Sciatic nerve (tissue), 2 donors: ENCODE measurements at regions of chr22 and their contacts with region 1.

Region 1: DNA sequence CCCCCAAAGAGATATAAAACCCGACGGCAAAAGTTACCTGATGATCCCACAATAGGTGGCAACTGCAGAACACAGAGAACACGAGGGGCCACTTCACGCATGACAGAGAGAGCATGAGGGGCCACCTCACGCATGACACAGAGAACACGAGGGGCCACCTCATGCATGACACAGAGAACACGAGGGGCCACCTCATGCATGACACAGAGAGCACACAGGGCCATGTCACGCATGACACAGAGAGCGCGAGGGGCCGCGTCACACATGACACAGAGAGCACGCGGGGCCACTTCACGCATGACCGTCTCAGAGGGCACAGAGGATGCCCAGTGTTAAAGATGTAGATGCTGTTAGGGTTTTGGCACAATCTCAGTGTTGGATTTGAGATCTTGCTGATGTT is 1359.5 kb downstream of the TBC1D22A start:
- DNase-seq: no peak
- ATAC-seq: no peak

Region 2: DNA sequence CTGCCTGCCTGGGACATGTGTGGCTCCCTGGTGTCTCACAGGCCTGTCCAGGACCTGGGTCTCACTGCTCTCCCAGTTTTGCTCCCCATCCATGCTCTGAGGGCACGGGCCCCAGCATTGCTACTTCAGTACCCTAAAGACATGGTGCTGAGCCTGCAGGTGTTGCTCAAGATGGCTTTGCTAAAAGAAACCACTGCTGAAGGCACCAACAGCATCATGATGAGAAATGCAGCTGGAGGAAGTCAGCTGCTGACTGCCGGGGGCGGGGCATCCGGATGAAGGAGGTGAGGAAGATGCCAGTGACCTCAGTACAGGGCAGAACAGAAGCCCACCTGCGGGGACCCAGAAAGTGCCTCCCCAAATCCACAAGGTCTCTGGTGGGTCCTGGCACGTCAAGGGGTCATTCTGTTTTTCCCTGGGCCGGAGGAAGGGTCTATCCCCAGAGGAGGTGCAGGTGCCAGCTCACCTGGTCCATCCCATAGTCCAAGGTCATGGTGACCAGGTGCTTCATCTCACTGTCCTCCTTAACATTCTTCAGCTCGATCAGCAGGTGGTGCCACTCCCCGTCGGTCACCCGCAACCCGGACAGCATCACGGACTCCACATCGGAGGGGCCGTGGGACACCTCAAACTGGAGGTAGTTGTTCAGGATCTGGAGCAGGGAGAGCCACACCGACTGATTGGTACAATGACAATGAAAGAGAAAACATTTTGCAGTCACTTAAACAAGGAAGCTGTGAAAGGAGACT is 1722.6 kb before region 1 on chr22:
- intact Hi-C with region 1: loop called (anchors 5 kb)
- DNase-seq: no peak
- ATAC-seq: no peak